Activated CD4-positive, alpha-beta memory T cell treated with anti-CD3 and anti-CD28 coated beads for 36 hours (primary cell): ENCODE measurements at regions of chr15 and their contacts with region 1.

Region 1: GRCh38 chr15:30991255-30992072 is at the start of gene MTMR10:
- DNase-seq: peak; percentile 76
- H3K4me3 Mint-ChIP-seq: peak within 1 kb of the TSS; percentile 87
- H3K27ac Mint-ChIP-seq: peak within 1 kb of the TSS; percentile 72
- H3K4me1 Mint-ChIP-seq: peaks cover 26% of the 10 kb centered on the region
- H3K27me3 Mint-ChIP-seq: no peaks in the 10 kb centered on the region
- total RNA-seq, gene MTMR10: 10.8 to 12.5 TPM

Region 2: GRCh38 chr15:30903497-30904201 is 87.8 kb before region 1 on chr15 and contains the start of gene FAN1:
- CTCF ChIA-PET with region 1: interaction called, 3 read pairs
- POLR2A ChIA-PET with region 1: no interaction called
- intact Hi-C with region 1: loop called (anchors 10 kb)
- DNase-seq: peak; percentile 89
- H3K4me3 Mint-ChIP-seq: peak within 1 kb of the TSS; percentile 90
- H3K27ac Mint-ChIP-seq: peak within 1 kb of the TSS; percentile 56
- H3K4me1 Mint-ChIP-seq: peaks cover 23% of the 10 kb centered on the region
- H3K27me3 Mint-ChIP-seq: peaks cover 5% of the 10 kb centered on the region
- total RNA-seq, gene FAN1: 12.6 to 15.0 TPM

Region 3: DNA sequence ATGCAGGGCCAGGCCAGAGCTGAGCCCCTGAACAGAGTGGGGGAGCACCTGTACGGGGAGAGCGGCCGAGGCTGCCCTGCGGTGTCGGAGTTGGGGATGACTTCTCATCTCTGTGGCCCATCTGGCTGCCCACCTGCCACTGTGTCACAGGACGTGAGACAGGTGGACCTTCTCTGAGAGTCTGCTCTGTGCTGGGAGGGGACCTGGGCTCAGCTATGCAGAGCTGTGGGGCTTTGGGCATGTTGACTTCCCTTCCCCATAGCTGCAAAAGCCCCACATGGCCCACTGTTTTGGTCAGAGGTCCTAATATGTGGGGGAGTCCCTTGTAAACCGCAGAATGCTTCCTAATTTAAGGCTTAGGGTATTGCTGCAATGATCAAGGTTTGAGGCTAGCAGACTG is 178.1 kb after region 1 on chr15:
- CTCF ChIA-PET with region 1: no interaction called
- POLR2A ChIA-PET with region 1: no interaction called
- intact Hi-C with region 1: loop called (anchors 5 kb)
- DNase-seq: no peak
- H3K4me3 Mint-ChIP-seq: no peak overlapping the region
- H3K27ac Mint-ChIP-seq: no peak overlapping the region
- H3K4me1 Mint-ChIP-seq: peaks cover 17% of the 10 kb centered on the region
- H3K27me3 Mint-ChIP-seq: no peaks in the 10 kb centered on the region

Region 4: DNA sequence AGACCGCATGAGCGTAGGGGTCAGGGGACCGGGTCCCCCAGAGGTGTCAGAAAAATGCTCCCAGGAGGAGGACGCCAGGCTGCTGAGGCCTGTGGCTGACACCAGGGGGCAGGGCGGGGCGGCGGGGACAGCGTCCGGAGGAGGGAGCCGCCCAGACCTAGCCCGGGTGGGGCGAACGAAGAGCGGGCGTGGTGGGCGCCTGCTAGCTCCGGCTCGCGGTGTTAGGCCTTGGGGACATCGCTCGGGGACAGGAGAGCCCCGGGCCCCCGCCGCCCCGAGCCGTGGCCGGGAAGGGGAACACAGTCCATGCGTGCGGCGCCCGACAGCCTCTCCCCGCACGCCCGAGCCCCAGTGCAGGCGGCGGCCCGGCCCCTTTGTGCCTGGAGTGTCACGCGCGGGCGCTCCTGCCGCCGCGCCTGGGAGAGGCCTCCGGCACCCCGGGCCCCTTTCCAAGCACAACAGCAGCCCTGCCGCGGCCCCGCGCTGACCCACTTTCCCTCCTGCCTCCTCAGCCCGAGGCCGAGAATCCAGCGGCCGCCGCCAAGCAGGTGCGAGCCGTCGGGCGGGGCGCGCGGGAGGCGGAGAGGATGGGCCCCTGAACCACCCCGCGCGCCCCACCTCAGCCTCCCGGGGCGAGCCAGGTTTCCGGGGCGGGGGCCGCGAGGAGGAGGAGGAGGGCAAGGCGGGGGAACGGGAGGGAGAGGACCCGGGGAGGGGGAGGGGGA is 224.2 kb after region 1 on chr15:
- CTCF ChIA-PET with region 1: no interaction called
- POLR2A ChIA-PET with region 1: no interaction called
- intact Hi-C with region 1: loop called (anchors 10 kb)
- DNase-seq: peak; percentile 88
- H3K4me3 Mint-ChIP-seq: peak overlapping the region; percentile 68
- H3K27ac Mint-ChIP-seq: peak overlapping the region; percentile 56
- H3K4me1 Mint-ChIP-seq: peaks cover 15% of the 10 kb centered on the region
- H3K27me3 Mint-ChIP-seq: no peaks in the 10 kb centered on the region